Naive thymus-derived CD4-positive, alpha-beta T cell (primary cell): ENCODE measurements at regions of chr3 and their contacts with region 1.

Region 1: GRCh38 chr3:4824926-4825325 is 154.3 kb upstream of the BHLHE40 start:
- DNase-seq: no peak
- ATAC-seq: no peak
- H3K4me3 ChIP-seq: no peak overlapping the region
- H3K4me3 Mint-ChIP-seq: peak overlapping the region; percentile 10 to 93 (median 84)
- H3K27ac ChIP-seq: peak overlapping the region; percentile 59
- H3K27ac Mint-ChIP-seq: peak overlapping the region; percentile 85 to 99 (median 94)
- H3K4me1 ChIP-seq: peaks cover 55 to 83% of the 10 kb centered on the region in 2 donors
- H3K4me1 Mint-ChIP-seq: peaks cover 69 to 99% (median 96%) of the 10 kb centered on the region in 7 donors
- H3K27me3 ChIP-seq: no peaks in the 10 kb centered on the region
- H3K27me3 Mint-ChIP-seq: no peaks in the 10 kb centered on the region

Region 2: DNA sequence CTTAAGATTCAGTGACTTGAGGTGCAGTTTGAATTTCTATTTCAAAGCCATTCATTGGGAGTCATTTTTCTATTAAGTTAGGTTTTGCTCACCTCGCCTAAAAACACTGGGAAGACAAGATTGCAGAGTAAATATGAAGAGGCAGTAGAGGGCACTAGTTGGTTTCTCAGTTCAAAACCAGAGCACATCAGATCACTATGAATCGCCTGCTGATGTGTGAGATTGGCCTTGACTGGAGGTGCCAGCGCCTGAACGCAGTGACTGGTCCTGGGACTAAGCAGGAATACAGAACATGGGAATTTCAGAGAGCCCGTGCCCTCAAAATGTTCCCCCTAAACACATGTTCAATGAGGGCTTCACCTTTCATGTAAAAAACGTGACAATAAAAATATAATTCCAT is 102.8 kb before region 1 on chr3:
- CTCF ChIA-PET with region 1: no interaction called
- POLR2A ChIA-PET with region 1: no interaction called
- intact Hi-C with region 1: loop called in 1 of 2 experiments (anchors 1 kb)
- DNase-seq: peak in 2 of 9 donors; percentile 27 to 33
- ATAC-seq: peak; percentile 76
- H3K4me3 ChIP-seq: no peak overlapping the region
- H3K4me3 Mint-ChIP-seq: peak overlapping the region in 1 of 10 donors; percentile 33
- H3K27ac ChIP-seq: no peak overlapping the region
- H3K27ac Mint-ChIP-seq: peak overlapping the region in 2 of 9 donors; percentile 34 to 82
- H3K4me1 ChIP-seq: no peaks in the 10 kb centered on the region
- H3K4me1 Mint-ChIP-seq: peaks cover 0 to 67% (median 9%) of the 10 kb centered on the region in 7 donors
- H3K27me3 ChIP-seq: no peaks in the 10 kb centered on the region
- H3K27me3 Mint-ChIP-seq: no peaks in the 10 kb centered on the region

Region 3: DNA sequence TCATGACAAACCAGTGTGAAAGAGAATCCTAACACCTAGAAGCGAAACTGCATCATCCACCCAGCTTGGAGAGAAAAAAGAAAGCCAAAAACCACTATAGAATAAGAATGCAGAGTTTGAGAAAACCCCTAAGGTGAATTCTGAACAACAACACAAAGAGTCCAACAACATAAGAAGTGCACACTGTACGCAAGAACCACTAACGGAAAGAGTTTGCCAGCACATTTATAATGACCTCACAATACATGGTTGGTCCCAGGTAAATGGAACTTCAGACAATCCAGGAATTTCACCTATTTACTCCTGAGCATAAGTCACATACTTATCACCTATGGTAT is 26.0 kb after region 1 on chr3:
- CTCF ChIA-PET with region 1: interaction called, 3 read pairs
- POLR2A ChIA-PET with region 1: interaction called, 7 read pairs
- intact Hi-C with region 1: loop called in 1 of 2 experiments (anchors 1 kb)
- DNase-seq: peak in 6 of 9 donors; percentile 19 to 64 (median 46)
- ATAC-seq: peak; percentile 83
- H3K4me3 ChIP-seq: no peak overlapping the region
- H3K4me3 Mint-ChIP-seq: peak overlapping the region in 9 of 10 donors; percentile 4 to 84 (median 56)
- H3K27ac ChIP-seq: peak overlapping the region; percentile 81
- H3K27ac Mint-ChIP-seq: peak overlapping the region; percentile 85 to 99 (median 90)
- H3K4me1 ChIP-seq: peaks cover 37 to 58% of the 10 kb centered on the region in 2 donors
- H3K4me1 Mint-ChIP-seq: peaks cover 49 to 92% (median 86%) of the 10 kb centered on the region in 7 donors
- H3K27me3 ChIP-seq: no peaks in the 10 kb centered on the region
- H3K27me3 Mint-ChIP-seq: no peaks in the 10 kb centered on the region

Region 4: GRCh38 chr3:5016218-5017161 is 191.6 kb after region 1 on chr3:
- CTCF ChIA-PET with region 1: no interaction called
- POLR2A ChIA-PET with region 1: interaction called, 3 read pairs
- intact Hi-C with region 1: loop called in 1 of 2 experiments (anchors 2 kb)
- DNase-seq: no peak
- ATAC-seq: peak; percentile 57
- H3K4me3 ChIP-seq: no peak overlapping the region
- H3K4me3 Mint-ChIP-seq: peak overlapping the region in 1 of 10 donors; percentile 54
- H3K27ac ChIP-seq: no peak overlapping the region
- H3K27ac Mint-ChIP-seq: peak overlapping the region in 6 of 9 donors; percentile 6 to 83 (median 52)
- H3K4me1 ChIP-seq: peaks cover 17 to 45% of the 10 kb centered on the region in 2 donors
- H3K4me1 Mint-ChIP-seq: peaks cover 30 to 88% (median 41%) of the 10 kb centered on the region in 7 donors
- H3K27me3 ChIP-seq: no peaks in the 10 kb centered on the region
- H3K27me3 Mint-ChIP-seq: peaks cover 0 to 5% (median 0%) of the 10 kb centered on the region in 5 donors

Region 5: GRCh38 chr3:5057857-5058324 is 233.0 kb after region 1 on chr3:
- CTCF ChIA-PET with region 1: interaction called, 9 read pairs
- POLR2A ChIA-PET with region 1: interaction called, 3 read pairs
- intact Hi-C with region 1: loop called (anchors 1 to 5 kb)
- DNase-seq: peak; percentile 22 to 75 (median 64)
- ATAC-seq: peak; percentile 92
- H3K4me3 ChIP-seq: no peak overlapping the region
- H3K4me3 Mint-ChIP-seq: peak overlapping the region in 1 of 10 donors; percentile 25
- H3K27ac ChIP-seq: no peak overlapping the region
- H3K27ac Mint-ChIP-seq: no peak overlapping the region
- H3K4me1 ChIP-seq: no peaks in the 10 kb centered on the region
- H3K4me1 Mint-ChIP-seq: peaks cover 0 to 38% (median 0%) of the 10 kb centered on the region in 7 donors
- H3K27me3 ChIP-seq: no peaks in the 10 kb centered on the region
- H3K27me3 Mint-ChIP-seq: peaks cover 0 to 4% (median 0%) of the 10 kb centered on the region in 5 donors